CD8-positive, alpha-beta T cell (primary cell): ENCODE measurements at regions of chr9 and their contacts with region 1.

Region 1: DNA sequence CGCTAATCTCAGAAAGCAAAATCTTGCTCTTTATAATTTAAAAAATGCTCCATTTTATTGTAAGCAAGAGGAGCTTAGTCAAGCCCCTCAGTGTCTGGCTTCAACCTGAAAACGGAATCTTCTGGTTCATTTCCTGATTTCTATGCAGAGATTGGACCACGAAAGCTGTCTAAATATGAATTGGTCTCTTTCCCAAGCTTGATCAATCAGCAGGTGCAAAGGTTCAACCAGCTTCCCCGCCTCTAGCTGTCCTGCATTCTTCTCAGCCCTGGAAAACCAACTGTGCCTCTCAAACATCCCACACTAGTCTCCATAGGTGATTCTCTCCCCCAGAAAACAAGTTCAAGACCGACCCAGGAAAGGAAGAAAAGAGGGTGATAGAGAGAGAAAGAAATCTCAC is 34.5 kb downstream of the FNBP1 start:
- DNase-seq: no peak
- ATAC-seq: no peak
- H3K4me3 ChIP-seq: no peak overlapping the region
- H3K4me3 Mint-ChIP-seq: peak overlapping the region; percentile 11
- H3K27ac ChIP-seq: peak overlapping the region in 1 of 2 experiments; percentile 73
- H3K27ac Mint-ChIP-seq: peak overlapping the region; percentile 93
- H3K4me1 ChIP-seq: peaks cover 38% of the 10 kb centered on the region
- H3K4me1 Mint-ChIP-seq: peaks cover 74% of the 10 kb centered on the region
- H3K27me3 ChIP-seq: no peaks in the 10 kb centered on the region
- H3K27me3 Mint-ChIP-seq: no peaks in the 10 kb centered on the region
- CTCF ChIP-seq: no peak

Region 2: GRCh38 chr9:129900263-129901027 is 108.1 kb before region 1 on chr9:
- CTCF ChIA-PET with region 1: no interaction called
- POLR2A ChIA-PET with region 1: no interaction called
- intact Hi-C with region 1: no loop called
- DNase-seq: no peak
- ATAC-seq: no peak
- H3K4me3 ChIP-seq: no peak overlapping the region
- H3K4me3 Mint-ChIP-seq: no peak overlapping the region
- H3K27ac ChIP-seq: no peak overlapping the region
- H3K27ac Mint-ChIP-seq: peak overlapping the region; percentile 66
- H3K4me1 ChIP-seq: peaks cover 8% of the 10 kb centered on the region
- H3K4me1 Mint-ChIP-seq: peaks cover 24% of the 10 kb centered on the region
- H3K27me3 ChIP-seq: no peaks in the 10 kb centered on the region
- H3K27me3 Mint-ChIP-seq: no peaks in the 10 kb centered on the region
- CTCF ChIP-seq: no peak

Region 3: DNA sequence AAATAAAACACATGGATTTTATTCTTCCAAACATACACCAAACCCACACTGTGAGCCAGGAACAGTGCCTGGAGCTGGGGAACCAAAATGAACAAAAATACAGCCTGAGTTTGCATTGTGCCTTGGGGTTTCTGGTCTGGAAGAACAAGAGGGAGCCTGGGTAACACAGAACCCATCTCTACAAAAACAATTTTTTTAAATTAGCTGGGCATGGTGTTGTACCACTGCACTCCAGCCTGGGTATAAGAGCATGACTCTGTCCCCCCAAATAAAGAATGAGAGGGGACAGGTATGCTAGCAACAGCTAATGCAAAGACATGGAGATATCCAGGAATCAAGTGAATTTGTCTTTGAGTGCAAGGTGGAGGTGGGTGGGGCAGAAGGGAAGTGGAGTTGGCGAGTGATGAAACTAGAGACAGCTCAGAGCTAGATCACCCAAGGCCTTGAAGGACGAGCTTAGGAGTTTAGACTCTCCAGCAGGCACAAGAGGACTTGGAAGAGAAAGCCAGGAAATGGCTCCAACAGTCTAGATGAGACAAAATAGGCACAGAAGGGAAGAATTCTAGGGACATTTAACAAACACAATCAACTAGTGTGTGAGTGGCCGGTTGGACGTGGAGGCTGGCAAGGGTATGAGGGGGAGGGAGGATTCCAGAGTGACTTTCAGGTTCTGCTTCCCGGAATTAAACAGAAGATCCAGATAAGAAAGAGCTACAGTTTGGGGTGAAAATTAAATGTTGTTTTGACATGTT is 13.0 kb before region 1 on chr9:
- CTCF ChIA-PET with region 1: interaction called, 4 read pairs
- POLR2A ChIA-PET with region 1: interaction called, 5 read pairs
- intact Hi-C with region 1: loop called in 1 of 2 experiments (anchors 2 kb)
- DNase-seq: peak in 1 of 9 experiments; percentile 53
- ATAC-seq: peak; percentile 43
- H3K4me3 ChIP-seq: no peak overlapping the region
- H3K4me3 Mint-ChIP-seq: peak overlapping the region; percentile 40
- H3K27ac ChIP-seq: peak overlapping the region; percentile 13 to 41
- H3K27ac Mint-ChIP-seq: peak overlapping the region; percentile 85
- H3K4me1 ChIP-seq: peaks cover 60% of the 10 kb centered on the region
- H3K4me1 Mint-ChIP-seq: peaks cover 67% of the 10 kb centered on the region
- H3K27me3 ChIP-seq: no peaks in the 10 kb centered on the region
- H3K27me3 Mint-ChIP-seq: no peaks in the 10 kb centered on the region
- CTCF ChIP-seq: no peak

Region 4: GRCh38 chr9:130029223-130029973 is 20.9 kb after region 1 on chr9:
- CTCF ChIA-PET with region 1: no interaction called
- POLR2A ChIA-PET with region 1: interaction called, 6 read pairs
- intact Hi-C with region 1: loop called in 1 of 2 experiments (anchors 2 kb)
- DNase-seq: peak in 2 of 9 experiments; percentile 29 to 60
- ATAC-seq: no peak
- H3K4me3 ChIP-seq: no peak overlapping the region
- H3K4me3 Mint-ChIP-seq: peak overlapping the region; percentile 35
- H3K27ac ChIP-seq: peak overlapping the region in 1 of 2 experiments; percentile 52
- H3K27ac Mint-ChIP-seq: peak overlapping the region; percentile 96
- H3K4me1 ChIP-seq: peaks cover 85% of the 10 kb centered on the region
- H3K4me1 Mint-ChIP-seq: peaks cover 86% of the 10 kb centered on the region
- H3K27me3 ChIP-seq: no peaks in the 10 kb centered on the region
- H3K27me3 Mint-ChIP-seq: no peaks in the 10 kb centered on the region
- CTCF ChIP-seq: no peak